Transverse colon (tissue), 4 donors: ENCODE measurements at regions of chr7 and their contacts with region 1.

Region 1: GRCh38 chr7:1869452-1870130 is 199.5 kb downstream of the ELFN1 start:
- DNase-seq: no peak
- H3K4me3 ChIP-seq: no peak overlapping the region
- H3K27ac ChIP-seq: no peak overlapping the region
- H3K4me1 ChIP-seq: peaks cover 0 to under 1% (median 0%) of the 10 kb centered on the region in 4 donors
- H3K27me3 ChIP-seq: no peaks in the 10 kb centered on the region
- CTCF ChIP-seq: no peak
- EP300 ChIP-seq: no peak
- POLR2A ChIP-seq: no peak

Region 2: GRCh38 chr7:1787241-1787640 is 82.3 kb before region 1 on chr7:
- in situ Hi-C with region 1: no loop called
- intact Hi-C with region 1: no loop called
- DNase-seq: no peak
- H3K4me3 ChIP-seq: no peak overlapping the region
- H3K27ac ChIP-seq: no peak overlapping the region
- H3K4me1 ChIP-seq: no peaks in the 10 kb centered on the region
- H3K27me3 ChIP-seq: peaks cover 21% of the 10 kb centered on the region
- CTCF ChIP-seq: no peak
- EP300 ChIP-seq: no peak
- POLR2A ChIP-seq: no peak

Region 3: DNA sequence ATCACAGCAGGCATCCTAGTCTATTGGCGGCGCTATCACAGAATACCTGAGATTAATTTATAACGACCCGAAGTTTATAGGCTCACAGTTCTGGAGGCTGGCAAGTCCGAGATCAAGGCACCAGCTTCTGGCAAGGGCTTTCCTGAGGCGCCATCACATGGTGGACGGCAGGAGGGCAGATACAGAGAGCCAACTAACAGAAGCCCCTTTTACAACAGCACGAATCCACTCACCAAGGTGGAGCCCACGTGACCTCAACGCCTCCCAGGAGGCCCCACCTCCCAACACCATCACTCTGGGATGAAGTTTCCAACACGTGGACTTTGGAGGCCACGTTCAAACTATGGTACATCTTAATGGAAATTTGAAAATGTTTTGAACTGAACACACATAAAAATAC is 55.8 kb after region 1 on chr7:
- in situ Hi-C with region 1: no loop called
- intact Hi-C with region 1: loop called (anchors 2 kb)
- DNase-seq: no peak
- H3K4me3 ChIP-seq: no peak overlapping the region
- H3K27ac ChIP-seq: no peak overlapping the region
- H3K4me1 ChIP-seq: peaks cover 0 to 22% (median 5%) of the 10 kb centered on the region in 4 donors
- H3K27me3 ChIP-seq: no peaks in the 10 kb centered on the region
- CTCF ChIP-seq: no peak
- EP300 ChIP-seq: no peak
- POLR2A ChIP-seq: no peak